ENCODE measurements at regions of chr12 and their contacts with region 1.

Region 1: DNA sequence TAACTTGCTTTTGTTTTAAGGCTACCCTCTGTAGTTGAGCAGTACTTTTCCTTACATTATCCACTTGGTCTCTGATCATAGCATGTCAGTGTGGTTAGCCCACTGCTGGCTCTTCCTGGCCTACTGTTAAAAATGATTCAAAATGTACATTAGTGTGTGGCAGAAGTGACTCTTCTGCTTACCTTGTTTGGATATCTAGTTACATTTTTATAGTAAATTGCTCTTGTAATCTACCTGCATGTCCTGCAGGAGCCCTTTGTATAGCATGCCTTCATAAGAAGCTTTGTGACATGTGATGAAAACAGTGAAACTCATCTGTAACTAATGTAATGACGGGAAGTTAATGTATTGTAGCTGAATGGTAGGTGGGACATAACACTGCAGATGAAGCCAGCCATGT is 8.1 kb downstream of the SPATS2 start:
- DNase-seq: no peak
- H3K4me3 ChIP-seq: no peak overlapping the region
- H3K27ac ChIP-seq: no peak overlapping the region
- H3K4me1 ChIP-seq: no peaks in the 10 kb centered on the region
- H3K27me3 ChIP-seq: no peaks in the 10 kb centered on the region
- CTCF ChIP-seq: no peak

Region 2: DNA sequence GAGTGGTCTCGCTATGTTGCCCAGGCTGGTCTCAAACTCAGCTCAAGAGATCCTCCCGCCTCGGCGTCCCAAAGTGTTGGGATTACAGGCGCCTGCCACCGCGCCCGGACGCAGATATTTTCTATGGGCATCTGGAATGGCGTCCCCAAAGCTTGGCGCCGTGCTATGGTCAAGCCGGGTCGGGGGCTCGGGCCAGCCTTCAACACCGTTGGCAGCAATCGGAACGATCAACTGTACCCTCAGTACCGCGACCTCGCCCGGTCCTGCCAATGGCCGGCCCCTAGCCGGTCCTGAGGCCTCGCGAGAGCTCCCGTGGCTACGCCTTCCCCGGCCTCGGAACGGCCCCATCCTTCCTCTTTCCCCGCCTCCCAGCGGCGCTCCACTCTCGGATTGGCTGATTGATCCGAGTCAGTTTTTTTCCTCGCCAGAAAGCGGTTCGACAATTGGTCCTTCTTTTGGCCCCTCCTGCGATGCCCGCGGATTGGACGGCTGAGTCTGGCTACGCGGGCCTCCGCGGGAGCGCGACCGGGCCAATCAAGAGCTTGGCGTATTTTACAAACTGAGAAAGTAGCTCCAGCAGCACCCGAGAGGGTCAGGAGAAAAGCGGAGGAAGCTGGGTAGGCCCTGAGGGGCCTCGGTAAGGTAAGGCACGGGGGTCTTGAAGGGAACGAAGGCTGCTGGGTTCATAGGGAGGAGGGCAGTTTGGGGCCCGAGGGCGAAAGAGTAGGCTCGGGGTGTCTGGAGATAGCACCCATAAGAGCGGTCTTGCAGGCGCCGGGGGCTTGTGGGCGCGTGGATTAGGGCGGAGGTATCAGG is 52.5 kb before region 1 on chr12 and contains the start of gene TROAP:
- CTCF ChIA-PET with region 1: interaction called, 12 read pairs
- POLR2A ChIA-PET with region 1: no interaction called
- intact Hi-C with region 1: no loop called
- DNase-seq: peak; percentile 93 to 98
- H3K4me3 ChIP-seq: peak within 1 kb of the TSS; percentile 68
- H3K27ac ChIP-seq: 0 out of 2 replicates have a peak within 1 kb of the TSS, but pooled peaks have one; percentile 6
- H3K4me1 ChIP-seq: peaks cover 9% of the 10 kb centered on the region; the same call in 1 of the 2 replicates
- H3K27me3 ChIP-seq: no peaks in the 10 kb centered on the region
- CTCF ChIP-seq: no peak
- total RNA-seq, gene TROAP: 79.4 and 79.9 TPM in 2 replicates

Region 3: GRCh38 chr12:49428793-49429192 is 53.4 kb after region 1 on chr12:
- CTCF ChIA-PET with region 1: no interaction called
- POLR2A ChIA-PET with region 1: no interaction called
- intact Hi-C with region 1: no loop called
- DNase-seq: no peak
- H3K4me3 ChIP-seq: no peak overlapping the region
- H3K27ac ChIP-seq: no peak overlapping the region
- H3K4me1 ChIP-seq: no peaks in the 10 kb centered on the region
- H3K27me3 ChIP-seq: no peaks in the 10 kb centered on the region
- CTCF ChIP-seq: no peak

Region 4: GRCh38 chr12:49855005-49855404 is 479.6 kb after region 1 on chr12:
- CTCF ChIA-PET with region 1: no interaction called
- POLR2A ChIA-PET with region 1: no interaction called
- intact Hi-C with region 1: no loop called
- DNase-seq: peak in 1 of 2 experiments; percentile 51
- H3K4me3 ChIP-seq: no peak overlapping the region
- H3K27ac ChIP-seq: no peak overlapping the region
- H3K4me1 ChIP-seq: no peaks in the 10 kb centered on the region
- H3K27me3 ChIP-seq: peaks cover 7% of the 10 kb centered on the region
- CTCF ChIP-seq: no peak